A673 (cell line): ENCODE measurements at regions of chrX and their contacts with region 1.

Region 1: DNA sequence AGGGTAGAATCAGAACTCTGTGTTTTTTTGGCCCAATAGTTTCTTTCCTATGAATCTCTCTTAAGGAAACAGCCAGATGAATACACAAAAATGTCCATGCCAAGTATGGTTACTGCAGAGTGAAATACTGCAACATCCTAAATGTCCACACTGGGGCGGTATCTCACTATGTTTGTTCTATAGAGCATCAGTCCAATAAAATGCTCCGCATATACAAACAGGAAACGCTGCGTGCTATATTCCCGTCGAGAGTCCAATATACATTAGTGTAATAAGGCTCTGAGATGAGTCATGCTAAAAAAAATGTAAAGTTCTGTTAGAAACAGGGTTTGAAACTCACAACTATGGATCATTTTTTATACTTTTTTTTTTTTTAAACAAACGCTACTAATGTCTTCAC is 72.9 kb upstream of the ENOX2 start:
- DNase-seq: peak; percentile 78
- H3K4me3 ChIP-seq: no peak overlapping the region
- H3K27ac ChIP-seq: no peak overlapping the region
- H3K4me1 ChIP-seq: no peaks in the 10 kb centered on the region
- H3K27me3 ChIP-seq: no peaks in the 10 kb centered on the region
- CTCF ChIP-seq: peak; percentile 78

Region 2: GRCh38 chrX:130680164-130681035 is 295.5 kb before region 1 on chrX:
- CTCF ChIA-PET with region 1: no interaction called
- POLR2A ChIA-PET with region 1: no interaction called
- intact Hi-C with region 1: no loop called
- DNase-seq: no peak
- H3K4me3 ChIP-seq: no peak overlapping the region
- H3K27ac ChIP-seq: no peak overlapping the region
- H3K4me1 ChIP-seq: no peaks in the 10 kb centered on the region
- H3K27me3 ChIP-seq: no peaks in the 10 kb centered on the region
- CTCF ChIP-seq: no peak

Region 3: DNA sequence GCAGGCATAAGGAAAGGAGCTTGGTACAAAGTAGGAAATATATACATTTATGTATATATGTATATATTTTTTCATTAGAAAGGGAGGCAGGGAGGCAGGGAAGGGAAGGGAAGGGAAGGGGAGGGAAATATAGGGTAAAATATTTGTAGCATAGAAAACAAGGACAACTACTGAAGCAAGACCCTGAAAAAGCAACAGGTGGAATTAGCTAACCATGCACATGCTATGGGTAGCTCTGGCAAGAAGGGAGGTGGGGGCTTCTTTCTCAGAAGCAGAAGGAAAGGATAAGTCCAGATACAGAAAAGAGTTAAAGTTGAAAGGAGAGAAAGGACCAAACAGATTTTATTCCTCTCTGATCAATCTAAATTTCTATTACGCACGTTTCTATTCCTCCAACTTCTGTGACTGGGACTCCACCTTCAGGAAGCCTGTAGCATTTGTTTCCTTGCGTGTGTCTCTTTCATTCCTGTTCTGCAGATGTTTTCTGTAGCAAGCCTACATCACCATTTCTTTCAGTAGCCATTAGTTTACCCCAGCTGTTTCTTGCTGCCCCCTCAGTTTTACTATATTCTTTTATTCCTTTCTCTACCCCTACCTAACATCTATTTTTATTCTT is 650.8 kb after region 1 on chrX:
- CTCF ChIA-PET with region 1: no interaction called
- POLR2A ChIA-PET with region 1: no interaction called
- intact Hi-C with region 1: loop called (anchors 2 kb)
- DNase-seq: peak; percentile 33
- H3K4me3 ChIP-seq: no peak overlapping the region
- H3K27ac ChIP-seq: no peak overlapping the region
- H3K4me1 ChIP-seq: no peaks in the 10 kb centered on the region
- H3K27me3 ChIP-seq: peaks cover 44% of the 10 kb centered on the region
- CTCF ChIP-seq: peak; percentile 56

Region 4: DNA sequence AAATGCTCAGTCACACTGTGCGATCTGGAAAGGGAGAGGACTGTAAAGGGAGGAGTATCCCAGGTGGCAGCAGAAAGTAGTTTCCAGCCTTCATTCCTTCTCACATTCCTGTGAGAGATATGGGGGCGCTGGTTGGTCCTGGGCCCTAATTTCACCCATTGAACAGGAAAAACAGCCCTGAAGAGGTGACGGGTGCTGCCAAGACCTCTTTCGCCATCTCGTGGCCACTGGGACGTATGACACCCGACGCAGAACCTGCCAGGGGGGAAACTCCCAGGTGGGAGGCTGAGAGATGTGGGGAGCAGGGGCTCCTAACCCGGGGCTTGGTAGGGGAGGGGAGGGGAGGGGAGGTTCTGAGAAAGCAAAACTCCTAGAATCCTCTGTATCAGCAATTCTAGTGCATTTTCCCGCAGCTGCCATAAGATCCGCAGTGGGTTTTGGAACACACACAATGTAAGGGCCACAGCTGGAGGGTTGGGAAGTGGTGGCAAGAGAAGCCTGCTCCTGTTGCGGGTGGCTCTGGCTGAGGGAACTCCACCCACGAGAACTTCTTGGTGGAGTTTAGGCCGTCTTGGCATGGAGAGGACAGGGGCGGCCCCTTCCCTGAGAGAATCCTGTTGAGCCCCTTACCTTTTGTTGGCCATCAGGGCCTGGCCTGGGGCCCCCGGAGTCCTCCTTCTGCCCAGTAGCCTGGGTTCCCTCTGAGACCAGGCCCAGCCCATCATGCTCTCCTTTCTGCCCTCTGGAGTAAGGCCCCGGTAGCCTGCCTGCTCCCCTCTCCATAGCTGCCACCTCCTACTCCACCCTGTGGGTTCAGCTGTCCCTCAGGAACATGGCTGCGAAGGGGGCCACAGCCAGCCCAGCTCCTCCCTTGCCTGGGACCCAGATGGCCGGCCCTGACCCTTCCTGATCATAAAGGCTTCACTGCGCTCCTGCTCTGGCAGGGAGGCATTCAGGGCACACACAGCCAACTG is 702.0 kb after region 1 on chrX:
- CTCF ChIA-PET with region 1: no interaction called
- POLR2A ChIA-PET with region 1: interaction called, 3 read pairs
- intact Hi-C with region 1: loop called (anchors 2 kb)
- DNase-seq: peak; percentile 47
- H3K4me3 ChIP-seq: no peak overlapping the region
- H3K27ac ChIP-seq: no peak overlapping the region
- H3K4me1 ChIP-seq: no peaks in the 10 kb centered on the region
- H3K27me3 ChIP-seq: no peaks in the 10 kb centered on the region
- CTCF ChIP-seq: peak; percentile 80